Endothelial cell of umbilical vein (primary cell): ENCODE measurements at regions of chr3 and their contacts with region 1.

Region 1: GRCh38 chr3:29525254-29525881 is 244.5 kb downstream of the RBMS3 start:
- DNase-seq: peak; percentile 93
- H3K4me3 ChIP-seq: no peak overlapping the region
- H3K27ac ChIP-seq: peak overlapping the region; percentile 64
- H3K4me1 ChIP-seq: peaks cover 25% of the 10 kb centered on the region
- H3K27me3 ChIP-seq: no peaks in the 10 kb centered on the region
- CTCF ChIP-seq: no peak
- POLR2A ChIP-seq: peak; percentile 48

Region 2: DNA sequence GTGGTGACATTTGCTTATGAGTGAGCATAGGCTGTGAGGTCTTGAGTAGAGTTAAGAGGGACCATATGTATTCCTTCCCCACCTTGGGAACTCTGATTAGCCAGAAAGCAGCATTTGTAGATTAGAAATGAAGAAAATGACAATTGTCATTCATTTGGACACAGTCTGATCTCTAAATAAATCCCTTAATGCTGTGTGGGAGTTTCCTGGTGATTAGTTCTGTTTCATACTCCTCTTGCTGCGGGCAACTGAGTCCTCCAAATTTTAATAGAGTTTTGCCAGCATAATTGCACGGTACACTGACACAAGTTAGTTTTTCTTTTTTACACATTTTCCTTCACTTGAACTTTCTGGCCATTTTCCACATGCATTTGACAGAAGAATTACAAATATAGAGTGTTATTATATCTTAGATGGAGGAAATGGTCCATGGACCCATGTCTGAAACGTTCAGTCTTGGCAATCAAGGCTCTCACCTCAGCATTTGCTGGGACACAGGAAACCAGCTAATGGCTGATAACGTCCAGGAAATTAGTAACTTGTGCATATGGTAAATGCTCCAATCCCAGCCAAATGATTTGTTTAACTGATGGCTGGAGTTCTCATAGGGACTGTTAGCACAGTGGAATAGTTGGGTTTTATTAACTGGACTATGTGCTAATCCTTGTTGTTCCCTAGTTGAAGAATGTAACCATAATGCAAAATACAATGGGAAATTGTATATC is 76.7 kb after region 1 on chr3:
- CTCF ChIA-PET with region 1: no interaction called
- POLR2A ChIA-PET with region 1: no interaction called
- dilution Hi-C with region 1: no loop called
- intact Hi-C with region 1: loop called (anchors 5 kb)
- DNase-seq: peak; percentile 97
- H3K4me3 ChIP-seq: no peak overlapping the region
- H3K27ac ChIP-seq: peak overlapping the region; percentile 79
- H3K4me1 ChIP-seq: peaks cover 19% of the 10 kb centered on the region
- H3K27me3 ChIP-seq: no peaks in the 10 kb centered on the region
- CTCF ChIP-seq: no peak
- POLR2A ChIP-seq: peak; percentile 58

Region 3: DNA sequence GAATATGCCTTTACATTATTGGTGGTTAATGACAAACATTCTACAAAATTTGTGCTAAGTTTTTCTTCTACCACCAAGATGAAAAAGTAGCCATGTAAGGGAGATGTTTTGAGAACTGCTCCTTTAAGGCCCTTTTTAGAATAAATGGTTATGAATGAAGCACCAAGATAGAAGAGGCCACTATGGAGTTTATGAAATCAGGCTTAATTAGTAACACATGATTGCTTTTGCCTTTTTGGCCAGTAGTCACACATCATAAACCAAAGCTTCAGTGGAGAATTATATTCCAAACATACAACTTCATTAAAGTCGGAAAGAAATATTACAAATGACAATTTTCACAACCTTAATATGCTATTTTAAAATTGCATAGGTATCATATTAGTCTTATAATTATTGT is 87.2 kb after region 1 on chr3:
- CTCF ChIA-PET with region 1: no interaction called
- POLR2A ChIA-PET with region 1: no interaction called
- dilution Hi-C with region 1: no loop called
- intact Hi-C with region 1: no loop called
- DNase-seq: no peak
- H3K4me3 ChIP-seq: no peak overlapping the region
- H3K27ac ChIP-seq: no peak overlapping the region
- H3K4me1 ChIP-seq: no peaks in the 10 kb centered on the region
- H3K27me3 ChIP-seq: no peaks in the 10 kb centered on the region
- CTCF ChIP-seq: no peak
- POLR2A ChIP-seq: no peak